Activated naive CD4-positive, alpha-beta T cell treated with anti-CD3 and anti-CD28 coated beads for 36 hours (primary cell): ENCODE measurements at regions of chr3 and their contacts with region 1.

Region 1: GRCh38 chr3:187319699-187320302 is 28.3 kb upstream of the MASP1 start:
- DNase-seq: peak; percentile 82
- H3K4me3 Mint-ChIP-seq: no peak overlapping the region
- H3K27ac Mint-ChIP-seq: no peak overlapping the region
- H3K4me1 Mint-ChIP-seq: peaks cover 7% of the 10 kb centered on the region
- H3K27me3 Mint-ChIP-seq: peaks cover 21% of the 10 kb centered on the region

Region 2: DNA sequence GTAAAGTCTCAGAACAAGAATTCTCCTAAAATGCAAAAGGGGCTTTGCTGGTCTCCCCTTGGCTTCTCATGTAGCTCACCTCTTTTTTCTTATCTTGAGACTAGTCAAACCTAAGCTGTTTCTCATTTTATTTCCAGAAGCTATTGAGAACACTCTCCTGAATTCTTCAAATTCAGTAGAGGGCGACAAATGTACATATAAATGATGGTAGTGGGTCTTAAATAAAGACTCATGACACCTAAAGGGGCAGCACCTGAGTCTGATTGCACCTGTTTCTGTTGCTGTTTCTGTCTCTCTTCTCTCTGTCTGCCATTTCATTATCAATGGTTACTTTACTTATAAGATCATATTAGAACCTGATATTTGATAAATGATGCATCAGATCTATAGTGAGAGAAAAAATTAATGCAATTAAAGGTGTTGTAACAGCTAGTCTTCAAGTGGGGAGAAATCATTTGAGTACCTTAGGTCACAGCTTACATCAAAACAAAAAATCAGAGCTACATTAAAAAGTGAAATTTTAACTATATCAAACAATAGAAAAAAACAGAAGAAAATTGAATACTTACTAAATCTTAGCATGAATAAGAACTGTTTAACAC is 470.3 kb before region 1 on chr3:
- CTCF ChIA-PET with region 1: interaction called, 3 read pairs
- intact Hi-C with region 1: loop called (anchors 5 kb)
- DNase-seq: peak; percentile 45
- H3K4me3 Mint-ChIP-seq: no peak overlapping the region
- H3K27ac Mint-ChIP-seq: no peak overlapping the region
- H3K4me1 Mint-ChIP-seq: peaks cover 12% of the 10 kb centered on the region
- H3K27me3 Mint-ChIP-seq: peaks cover 3% of the 10 kb centered on the region

Region 3: GRCh38 chr3:187291001-187291511 is 28.7 kb before region 1 on chr3:
- CTCF ChIA-PET with region 1: interaction called, 10 read pairs
- intact Hi-C with region 1: no loop called
- DNase-seq: no peak
- H3K4me3 Mint-ChIP-seq: no peak overlapping the region
- H3K27ac Mint-ChIP-seq: no peak overlapping the region
- H3K4me1 Mint-ChIP-seq: peaks cover 2% of the 10 kb centered on the region
- H3K27me3 Mint-ChIP-seq: peaks cover 22% of the 10 kb centered on the region

Region 4: GRCh38 chr3:187616307-187616972 is 296.6 kb after region 1 on chr3:
- CTCF ChIA-PET with region 1: interaction called, 49 read pairs
- intact Hi-C with region 1: loop called (anchors 1 kb)
- DNase-seq: peak; percentile 79
- H3K4me3 Mint-ChIP-seq: no peak overlapping the region
- H3K27ac Mint-ChIP-seq: no peak overlapping the region
- H3K4me1 Mint-ChIP-seq: no peaks in the 10 kb centered on the region
- H3K27me3 Mint-ChIP-seq: peaks cover 4% of the 10 kb centered on the region

Region 5: GRCh38 chr3:187679638-187680396 is 360.0 kb after region 1 on chr3:
- CTCF ChIA-PET with region 1: interaction called, 283 read pairs
- intact Hi-C with region 1: loop called (anchors 1 kb)
- DNase-seq: peak; percentile 80
- H3K4me3 Mint-ChIP-seq: no peak overlapping the region
- H3K27ac Mint-ChIP-seq: no peak overlapping the region
- H3K4me1 Mint-ChIP-seq: peaks cover 6% of the 10 kb centered on the region
- H3K27me3 Mint-ChIP-seq: peaks cover 28% of the 10 kb centered on the region

Region 6: DNA sequence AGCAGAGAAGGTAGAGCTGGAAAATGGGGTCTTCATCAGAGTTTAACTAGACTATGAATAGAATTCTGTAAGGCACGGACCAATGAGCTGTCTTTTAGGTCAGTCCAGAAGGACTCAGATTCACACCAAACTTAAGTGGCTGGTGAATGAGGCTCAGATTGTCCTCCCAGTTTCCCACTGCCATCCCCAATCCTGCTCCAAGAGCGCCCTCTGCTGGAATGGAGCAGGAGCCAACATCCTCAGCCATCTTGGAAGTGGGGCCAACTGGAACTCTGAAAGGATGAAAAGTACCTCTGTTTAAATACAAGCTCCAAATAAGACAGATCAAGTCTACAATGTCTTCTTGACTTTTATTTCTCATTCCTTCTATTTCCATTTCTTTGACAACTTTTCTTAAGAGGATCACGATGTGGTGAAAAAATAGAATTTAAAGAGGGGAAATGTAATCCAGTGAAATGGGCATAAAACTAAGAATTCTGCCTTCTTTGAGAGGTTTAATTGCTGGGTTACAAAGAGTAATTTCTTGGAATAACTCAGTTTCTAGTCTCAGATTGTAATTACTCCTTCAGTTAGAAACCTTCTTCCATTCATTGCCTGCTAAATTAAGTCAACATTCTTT is 1634.9 kb after region 1 on chr3:
- CTCF ChIA-PET with region 1: no interaction called
- intact Hi-C with region 1: loop called (anchors 5 kb)
- DNase-seq: peak; percentile 91
- H3K4me3 Mint-ChIP-seq: no peak overlapping the region
- H3K27ac Mint-ChIP-seq: no peak overlapping the region
- H3K4me1 Mint-ChIP-seq: peaks cover 39% of the 10 kb centered on the region
- H3K27me3 Mint-ChIP-seq: no peaks in the 10 kb centered on the region